Activated CD4-positive, alpha-beta T cell treated with anti-CD3 and anti-CD28 coated beads for 36 hours (primary cell): ENCODE measurements at regions of chr14 and their contacts with region 1.

Region 1: DNA sequence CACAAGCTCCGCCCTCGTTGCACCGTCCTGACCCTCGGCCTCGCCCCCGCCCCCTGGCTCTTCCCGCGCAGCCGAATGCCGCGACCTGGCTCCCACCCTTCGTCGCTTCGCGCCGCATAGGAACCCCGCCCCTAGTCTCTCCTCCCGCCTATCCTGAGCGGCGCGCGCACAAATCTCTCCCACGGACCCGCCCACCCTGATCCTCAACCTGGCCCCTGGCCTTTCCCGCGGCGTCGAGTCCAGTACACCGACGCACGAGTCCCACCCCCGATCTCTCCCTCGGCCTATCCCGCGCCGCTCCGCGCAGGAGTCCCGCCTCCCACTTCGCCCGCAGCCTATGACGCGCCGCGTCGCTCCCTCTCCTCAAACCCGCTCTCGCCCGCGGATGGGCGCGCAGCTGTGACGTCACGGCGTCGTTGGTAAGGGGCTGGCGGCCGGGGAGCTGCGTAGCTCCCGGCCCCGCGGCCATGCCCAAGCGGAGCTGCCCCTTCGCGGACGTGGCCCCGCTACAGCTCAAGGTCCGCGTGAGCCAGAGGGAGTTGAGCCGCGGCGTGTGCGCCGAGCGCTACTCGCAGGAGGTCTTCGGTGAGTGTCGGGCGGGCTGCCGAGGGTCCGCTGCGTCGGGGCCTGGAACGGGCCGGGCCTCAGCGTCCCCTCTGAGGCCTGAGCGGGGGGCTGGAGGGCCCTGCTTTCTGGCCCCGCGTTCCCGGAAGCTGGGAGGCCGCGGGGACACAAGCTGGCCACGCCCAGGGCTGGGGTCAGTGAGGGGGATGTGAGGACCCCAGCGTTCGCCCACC is at the start of gene SIVA1:
- DNase-seq: peak; percentile 100
- ATAC-seq: peak; percentile 92
- H3K4me3 Mint-ChIP-seq: peak within 1 kb of the TSS; percentile 84
- H3K27ac Mint-ChIP-seq: peak within 1 kb of the TSS; percentile 83
- H3K4me1 Mint-ChIP-seq: peaks cover 33% of the 10 kb centered on the region
- H3K27me3 Mint-ChIP-seq: no peaks in the 10 kb centered on the region
- total RNA-seq, gene SIVA1: 47.1 to 97.1 TPM

Region 2: GRCh38 chr14:104677512-104678332 is 75.2 kb before region 1 on chr14:
- CTCF ChIA-PET with region 1: no interaction called
- POLR2A ChIA-PET with region 1: no interaction called
- intact Hi-C with region 1: loop called in 1 of 2 experiments (anchors 1 kb)
- DNase-seq: peak; percentile 88
- ATAC-seq: peak; percentile 81
- H3K4me3 Mint-ChIP-seq: peak overlapping the region; percentile 62
- H3K27ac Mint-ChIP-seq: peak overlapping the region; percentile 79
- H3K4me1 Mint-ChIP-seq: peaks cover 14% of the 10 kb centered on the region
- H3K27me3 Mint-ChIP-seq: no peaks in the 10 kb centered on the region

Region 3: GRCh38 chr14:104800015-104800770 is 47.3 kb after region 1 on chr14:
- CTCF ChIA-PET with region 1: interaction called, 4 read pairs
- POLR2A ChIA-PET with region 1: interaction called, 4 read pairs
- intact Hi-C with region 1: loop called in 1 of 2 experiments (anchors 1 kb)
- DNase-seq: peak; percentile 88
- ATAC-seq: peak; percentile 77
- H3K4me3 Mint-ChIP-seq: peak overlapping the region; percentile 49
- H3K27ac Mint-ChIP-seq: no peak overlapping the region
- H3K4me1 Mint-ChIP-seq: peaks cover 22% of the 10 kb centered on the region
- H3K27me3 Mint-ChIP-seq: no peaks in the 10 kb centered on the region

Region 4: DNA sequence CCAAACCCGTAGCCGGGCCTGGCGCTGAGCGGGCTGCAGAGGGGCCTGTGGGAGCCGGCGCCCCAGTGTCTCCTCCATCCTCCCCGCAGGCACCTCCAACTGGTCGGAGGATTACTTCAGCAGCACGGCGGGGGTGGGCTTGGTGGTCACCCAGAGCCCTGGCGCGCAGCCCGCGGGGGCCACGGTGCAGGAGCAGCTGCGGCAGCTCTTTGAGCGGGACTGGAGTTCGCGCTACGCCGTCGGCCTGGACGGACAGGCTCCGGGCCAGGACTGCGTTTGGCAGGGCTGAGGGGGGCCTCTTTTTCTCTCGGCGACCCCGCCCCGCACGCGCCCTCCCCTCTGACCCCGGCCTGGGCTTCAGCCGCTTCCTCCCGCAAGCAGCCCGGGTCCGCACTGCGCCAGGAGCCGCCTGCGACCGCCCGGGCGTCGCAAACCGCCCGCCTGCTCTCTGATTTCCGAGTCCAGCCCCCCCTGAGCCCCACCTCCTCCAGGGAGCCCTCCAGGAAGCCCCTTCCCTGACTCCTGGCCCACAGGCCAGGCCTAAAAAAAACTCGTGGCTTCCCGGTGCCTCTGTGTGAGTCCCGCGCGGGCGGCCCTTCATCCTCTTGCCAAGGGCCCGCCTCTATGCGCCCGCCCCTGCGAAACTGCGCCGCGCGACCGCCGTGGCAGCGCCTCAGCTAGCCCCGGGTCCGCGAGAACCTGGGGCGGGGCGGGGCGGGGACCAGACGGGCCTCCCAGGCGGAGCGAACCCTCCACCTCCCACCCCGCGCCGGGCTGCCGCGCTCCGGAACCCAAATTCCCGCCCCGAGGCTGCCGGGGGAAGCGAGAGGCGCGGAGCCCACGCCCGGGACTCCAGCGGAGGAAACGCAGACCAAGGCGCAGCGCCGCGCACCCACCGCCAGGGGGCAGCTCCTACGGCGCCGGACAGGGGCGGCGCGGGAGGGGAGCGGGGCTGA is 180.0 kb after region 1 on chr14:
- CTCF ChIA-PET with region 1: interaction called, 4 read pairs
- POLR2A ChIA-PET with region 1: no interaction called
- intact Hi-C with region 1: loop called in 1 of 2 experiments (anchors 5 kb)
- DNase-seq: peak; percentile 93
- ATAC-seq: peak; percentile 96
- H3K4me3 Mint-ChIP-seq: peak overlapping the region; percentile 32
- H3K27ac Mint-ChIP-seq: no peak overlapping the region
- H3K4me1 Mint-ChIP-seq: no peaks in the 10 kb centered on the region
- H3K27me3 Mint-ChIP-seq: peaks cover 8% of the 10 kb centered on the region

Region 5: GRCh38 chr14:105180592-105181548 is 427.9 kb after region 1 on chr14 and contains the start of gene NUDT14:
- CTCF ChIA-PET with region 1: no interaction called
- POLR2A ChIA-PET with region 1: no interaction called
- intact Hi-C with region 1: loop called in 1 of 2 experiments (anchors 1 kb)
- DNase-seq: peak; percentile 93
- ATAC-seq: peak; percentile 90
- H3K4me3 Mint-ChIP-seq: peak within 1 kb of the TSS; percentile 69
- H3K27ac Mint-ChIP-seq: no peak within 1 kb of the TSS
- H3K4me1 Mint-ChIP-seq: peaks cover 10% of the 10 kb centered on the region
- H3K27me3 Mint-ChIP-seq: no peaks in the 10 kb centered on the region
- total RNA-seq, gene NUDT14: 12.3 to 13.5 TPM